ENCODE measurements at regions of chr4 and their contacts with region 1.

Region 1: GRCh38 chr4:145234091-145234706 is 53.8 kb upstream of the OTUD4 start:
- DNase-seq: peak; percentile 39 to 70
- ATAC-seq: peak; percentile 95

Region 2: GRCh38 chr4:144740316-144740715 is 493.9 kb before region 1 on chr4:
- intact Hi-C with region 1: no loop called
- DNase-seq: no peak
- ATAC-seq: no peak

Region 3: GRCh38 chr4:145557720-145558119 is 323.5 kb after region 1 on chr4:
- intact Hi-C with region 1: loop called in 1 of 2 experiments (anchors 5 kb)
- DNase-seq: peak; percentile 36 to 53
- ATAC-seq: peak; percentile 97

Region 4: DNA sequence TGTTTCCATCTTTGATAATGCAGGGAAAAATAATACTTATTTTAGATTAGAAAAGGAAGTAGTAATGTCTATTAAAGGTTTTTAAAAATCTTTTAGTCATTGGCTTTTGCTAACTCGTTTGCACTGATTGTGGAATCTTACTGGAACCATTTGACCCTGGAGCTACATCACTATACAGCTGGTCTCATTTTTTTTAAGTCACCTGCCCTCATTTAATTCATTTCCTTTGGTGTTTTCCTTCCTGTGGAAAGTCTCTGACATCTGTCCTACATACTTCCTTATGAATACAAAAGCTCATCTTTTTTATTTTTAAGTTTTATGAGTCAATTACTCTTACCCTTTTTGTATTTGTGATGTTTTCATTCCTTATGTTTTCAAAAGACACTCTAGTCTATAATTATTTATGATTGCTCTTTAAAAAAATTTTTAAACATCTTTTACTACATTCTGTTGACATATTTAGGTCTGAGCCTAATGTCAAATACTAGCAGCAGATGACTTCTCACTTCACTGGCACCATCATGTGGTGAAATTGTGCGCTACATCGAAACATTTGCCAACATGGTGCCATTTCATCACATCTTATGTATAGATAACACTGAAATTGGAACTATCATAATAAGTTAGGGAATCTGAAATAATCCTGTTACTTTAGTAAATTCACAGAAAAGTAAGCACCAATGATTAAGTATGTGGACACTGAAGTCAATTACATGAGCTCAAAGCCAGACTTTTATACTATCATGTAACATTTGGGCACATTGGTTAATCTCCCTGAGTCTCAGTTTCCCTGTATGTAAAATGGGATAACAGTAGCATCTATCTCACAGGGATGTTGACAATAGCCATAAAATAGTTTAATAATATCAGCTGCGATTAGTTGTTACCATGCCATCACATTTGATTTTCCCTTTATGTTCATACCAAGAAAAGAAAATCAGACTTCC is 375.6 kb after region 1 on chr4:
- intact Hi-C with region 1: loop called (anchors 5 to 10 kb)
- DNase-seq: peak; percentile 35 to 72
- ATAC-seq: peak; percentile 74

Region 5: DNA sequence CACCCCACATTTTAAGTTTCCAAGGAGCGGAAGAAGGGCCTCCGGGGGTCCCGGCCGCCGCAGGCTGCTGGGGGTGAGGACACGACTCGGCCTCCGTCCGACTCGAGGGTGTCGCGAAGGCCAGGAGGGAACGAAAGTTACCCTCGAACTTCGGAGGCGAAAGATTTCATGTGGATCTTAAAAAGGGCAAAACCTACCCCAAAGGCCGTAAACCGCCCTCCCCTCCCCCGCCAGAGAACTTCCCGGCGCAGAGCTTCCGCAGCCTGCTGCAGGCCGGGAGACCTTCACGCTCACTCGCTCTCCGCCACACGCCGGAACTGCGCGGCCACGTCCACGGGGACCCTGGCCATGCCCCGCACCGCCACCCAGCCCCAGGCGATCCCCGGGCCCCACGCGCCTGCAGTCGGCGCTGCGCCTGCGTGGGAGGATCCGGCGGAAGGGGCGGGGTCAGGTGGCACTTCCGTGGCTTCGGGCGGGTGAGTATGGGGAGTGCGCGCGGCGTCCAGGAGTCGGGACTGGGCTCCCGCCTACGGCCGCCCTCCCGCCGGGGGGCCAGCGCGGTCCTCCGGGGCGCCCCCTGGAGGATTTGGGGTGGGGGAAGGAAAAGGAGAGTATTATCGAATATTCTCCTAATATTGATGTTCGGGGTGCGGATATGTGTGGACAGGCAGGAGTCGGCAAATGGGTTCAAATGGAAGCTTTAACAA is 384.9 kb after region 1 on chr4 and contains the start of gene MMAA:
- intact Hi-C with region 1: loop called in 1 of 2 experiments (anchors 10 kb)
- DNase-seq: peak; percentile 95 to 97
- ATAC-seq: peak; percentile 98
- total RNA-seq, gene MMAA: 15.0 to 18.3 TPM